Astrocyte of the cerebellum (primary cell): ENCODE measurements at regions of chr15 and their contacts with region 1.

Region 1: GRCh38 chr15:86483936-86484335 is 404.3 kb downstream of the AGBL1 start:
- DNase-seq: no peak
- H3K4me3 ChIP-seq: no peak overlapping the region
- CTCF ChIP-seq: no peak

Region 2: GRCh38 chr15:86432861-86433260 is 51.1 kb before region 1 on chr15:
- in situ Hi-C with region 1: loop called (anchors 5 kb)
- DNase-seq: no peak
- H3K4me3 ChIP-seq: no peak overlapping the region
- CTCF ChIP-seq: no peak

Region 3: GRCh38 chr15:86553116-86553515 is 69.2 kb after region 1 on chr15:
- in situ Hi-C with region 1: no loop called
- DNase-seq: no peak
- H3K4me3 ChIP-seq: no peak overlapping the region
- CTCF ChIP-seq: no peak

Region 4: GRCh38 chr15:86572368-86572841 is 88.5 kb after region 1 on chr15:
- in situ Hi-C with region 1: no loop called
- DNase-seq: no peak
- H3K4me3 ChIP-seq: no peak overlapping the region
- CTCF ChIP-seq: no peak